ENCODE measurements at regions of chr22 and their contacts with region 1.

Region 1: DNA sequence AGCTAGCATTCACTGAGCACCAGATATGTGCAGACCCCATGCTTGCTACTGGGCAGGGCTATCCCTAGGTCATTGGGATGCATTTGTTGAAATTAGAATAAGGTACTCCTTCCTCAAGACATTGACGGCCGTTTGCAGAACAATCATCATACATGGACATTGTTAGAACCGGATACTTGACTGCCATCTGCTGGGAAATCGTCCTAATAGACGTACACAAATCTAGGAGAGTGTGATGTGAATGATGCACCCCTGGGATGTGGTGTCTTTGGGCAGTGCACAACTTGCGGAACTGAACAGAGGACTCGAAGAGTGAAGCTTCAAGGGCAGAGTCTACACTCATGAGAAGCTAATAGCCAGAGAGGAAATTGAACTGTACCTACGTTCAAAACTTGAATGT is 35.9 kb downstream of the MYO18B start:
- DNase-seq: peak in 1 of 3 donors; percentile 44
- ATAC-seq: peak; percentile 44
- H3K4me3 ChIP-seq: no peak overlapping the region
- H3K4me1 ChIP-seq: no peaks in the 10 kb centered on the region
- CTCF ChIP-seq: no peak

Region 2: GRCh38 chr22:25465949-25466348 is 311.9 kb before region 1 on chr22:
- intact Hi-C with region 1: loop called (anchors 10 kb)
- DNase-seq: no peak
- ATAC-seq: no peak
- H3K4me3 ChIP-seq: no peak overlapping the region
- H3K4me1 ChIP-seq: no peaks in the 10 kb centered on the region
- CTCF ChIP-seq: no peak

Region 3: GRCh38 chr22:25623310-25623734 is 154.5 kb before region 1 on chr22:
- intact Hi-C with region 1: no loop called
- DNase-seq: no peak
- ATAC-seq: no peak
- H3K4me3 ChIP-seq: no peak overlapping the region
- H3K4me1 ChIP-seq: no peaks in the 10 kb centered on the region
- CTCF ChIP-seq: no peak